ENCODE measurements at regions of chr5 and their contacts with region 1.

Region 1: DNA sequence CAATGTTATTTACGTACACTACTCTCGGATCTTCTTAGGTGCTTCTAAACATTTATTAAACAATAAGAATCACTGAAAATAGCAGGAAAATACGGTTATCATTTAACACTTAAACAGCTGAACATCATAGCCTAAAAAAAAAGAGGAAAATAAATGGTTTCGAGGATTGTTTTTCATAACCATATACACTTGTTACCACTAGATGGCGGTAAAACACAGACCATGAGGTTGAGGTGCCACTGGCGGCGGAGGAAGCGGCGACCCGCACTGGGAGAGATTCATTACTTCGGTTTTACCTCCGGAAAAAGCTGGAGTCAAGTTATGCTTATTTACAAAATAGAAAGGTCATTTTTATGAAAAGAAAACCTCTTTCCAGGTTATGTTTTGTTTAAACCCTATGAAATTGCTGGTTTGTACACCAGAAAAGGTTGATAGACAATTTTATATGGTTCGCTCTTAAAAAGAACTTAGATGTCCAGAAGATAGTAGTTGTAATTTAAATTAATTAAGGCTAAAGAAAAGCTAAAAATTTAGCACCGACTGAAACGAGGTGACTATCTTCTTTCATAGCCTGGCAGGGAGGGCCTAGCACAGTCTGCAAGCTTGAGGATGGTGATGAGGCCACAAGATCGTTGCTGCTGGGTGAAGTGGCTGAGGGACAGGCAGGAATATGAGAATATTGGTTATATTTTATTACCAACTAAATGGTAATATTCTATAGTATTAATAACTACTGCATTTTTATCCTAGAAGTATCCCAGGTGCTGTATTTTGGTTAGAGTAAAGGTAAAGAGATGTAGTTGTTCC is 605.7 kb downstream of the RAB3C start:
- DNase-seq: peak; percentile 63 to 73
- H3K4me3 ChIP-seq: no peak overlapping the region
- H3K4me1 ChIP-seq: no peaks in the 10 kb centered on the region
- H3K27me3 ChIP-seq: no peaks in the 10 kb centered on the region

Region 2: GRCh38 chr5:58800356-58800755 is 388.3 kb before region 1 on chr5:
- in situ Hi-C with region 1: no loop called
- DNase-seq: no peak
- H3K4me3 ChIP-seq: no peak overlapping the region
- H3K4me1 ChIP-seq: no peaks in the 10 kb centered on the region
- H3K27me3 ChIP-seq: peaks cover 2% of the 10 kb centered on the region; the same call in 1 of the 2 replicates

Region 3: DNA sequence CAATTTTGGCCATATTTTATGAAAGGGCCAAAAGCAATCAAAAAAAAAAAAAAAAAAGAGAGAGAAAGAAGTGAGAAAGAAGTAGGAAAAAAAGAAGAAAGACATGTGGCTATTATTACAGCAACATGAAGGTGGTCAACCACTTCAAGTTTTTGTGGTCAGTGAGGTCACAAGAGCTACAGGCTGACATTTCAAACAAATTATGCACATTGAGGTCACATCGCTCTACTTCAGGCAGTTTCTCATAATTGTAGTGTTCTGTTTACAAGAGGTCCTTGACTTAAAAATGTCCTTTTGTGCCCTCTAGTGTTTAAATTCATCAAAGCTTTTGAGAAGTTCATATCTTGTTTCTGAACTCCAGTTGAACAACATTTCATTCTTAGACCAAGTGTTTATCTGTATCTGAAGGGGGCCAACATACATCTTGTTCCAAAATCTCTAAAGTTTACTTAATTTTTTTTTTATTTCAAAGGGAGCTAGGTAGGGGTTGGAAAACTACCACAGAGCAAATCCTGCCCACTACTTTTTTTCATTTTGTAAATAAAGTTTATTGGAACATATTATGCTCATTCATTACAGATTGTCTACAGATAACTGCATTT is 191.8 kb after region 1 on chr5:
- in situ Hi-C with region 1: loop called (anchors 25 kb)
- DNase-seq: peak in 1 of 2 experiments; percentile 57
- H3K4me3 ChIP-seq: no peak overlapping the region
- H3K4me1 ChIP-seq: peaks cover 6% of the 10 kb centered on the region; the same call in 1 of the 2 replicates
- H3K27me3 ChIP-seq: no peaks in the 10 kb centered on the region

Region 4: GRCh38 chr5:59496524-59497134 is 308.0 kb after region 1 on chr5:
- in situ Hi-C with region 1: loop called (anchors 25 kb)
- DNase-seq: peak in 1 of 2 experiments; percentile 49
- H3K4me3 ChIP-seq: no peak overlapping the region
- H3K4me1 ChIP-seq: no peaks in the 10 kb centered on the region
- H3K27me3 ChIP-seq: no peaks in the 10 kb centered on the region

Region 5: GRCh38 chr5:59673438-59674058 is 484.9 kb after region 1 on chr5:
- in situ Hi-C with region 1: loop called (anchors 25 kb)
- DNase-seq: peak in 1 of 2 experiments; percentile 40
- H3K4me3 ChIP-seq: no peak overlapping the region
- H3K4me1 ChIP-seq: no peaks in the 10 kb centered on the region
- H3K27me3 ChIP-seq: no peaks in the 10 kb centered on the region; the same call in 1 of the 2 replicates

Measured in HAP-1 (cell line).